Activated T-helper 2 cell treated with anti-CD3 and anti-CD28 coated beads, Interferon-gamma antibody, Interleukin-2, Interleukin-4, amounts not matched to agents 10 μg/mL and 5 μg/mL and 100 μg/mL, durations not matched to agents 14 hours and 24 hours and 36 hours (primary cell): ENCODE measurements at regions of chr1 and their contacts with region 1.

Region 1: GRCh38 chr1:32992489-32993323 is 28.1 kb upstream of the RNF19B start:
- DNase-seq: peak; percentile 59
- H3K4me3 Mint-ChIP-seq: peak overlapping the region; percentile 53
- H3K27ac Mint-ChIP-seq: peak overlapping the region; percentile 90
- H3K4me1 Mint-ChIP-seq: peaks cover 59% of the 10 kb centered on the region
- H3K27me3 Mint-ChIP-seq: no peaks in the 10 kb centered on the region

Region 2: DNA sequence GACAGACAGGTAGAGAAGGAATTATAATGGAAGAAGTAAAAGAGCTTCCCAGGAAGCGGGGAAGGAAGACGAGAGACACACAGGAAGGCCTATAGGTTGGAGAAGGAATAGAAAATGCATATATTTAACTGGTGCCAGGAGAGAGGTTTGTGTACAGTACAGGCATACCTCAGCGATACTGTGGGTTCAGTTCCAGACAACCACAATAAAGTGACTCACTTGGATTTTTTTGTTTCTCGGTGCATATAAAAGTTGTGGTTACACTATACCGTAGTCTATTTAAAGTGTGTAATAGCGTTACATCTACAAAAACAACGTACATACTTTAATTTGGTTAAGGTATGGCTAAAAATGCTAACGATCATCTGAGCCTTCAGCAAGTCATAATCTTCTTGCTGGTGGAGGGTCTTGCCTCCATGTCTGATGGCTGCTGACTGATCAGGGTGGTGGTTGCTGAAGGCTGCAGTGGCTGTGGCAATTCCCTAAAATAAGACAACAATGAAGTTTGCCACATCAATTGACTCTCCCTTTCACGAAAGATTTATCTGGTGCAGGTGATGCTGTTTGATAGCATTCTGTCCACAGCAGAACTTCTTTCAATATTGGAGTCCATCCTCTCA is 191.5 kb before region 1 on chr1:
- intact Hi-C with region 1: loop called (anchors 1 kb)
- DNase-seq: no peak
- H3K4me3 Mint-ChIP-seq: peak overlapping the region; percentile 67
- H3K27ac Mint-ChIP-seq: peak overlapping the region; percentile 92
- H3K4me1 Mint-ChIP-seq: peaks cover 43% of the 10 kb centered on the region
- H3K27me3 Mint-ChIP-seq: no peaks in the 10 kb centered on the region

Region 3: GRCh38 chr1:32876341-32877210 is 116.1 kb before region 1 on chr1:
- intact Hi-C with region 1: no loop called
- DNase-seq: peak; percentile 58
- H3K4me3 Mint-ChIP-seq: no peak overlapping the region
- H3K27ac Mint-ChIP-seq: no peak overlapping the region
- H3K4me1 Mint-ChIP-seq: peaks cover 4% of the 10 kb centered on the region
- H3K27me3 Mint-ChIP-seq: peaks cover 26% of the 10 kb centered on the region

Region 4: GRCh38 chr1:32939655-32940371 is 52.9 kb before region 1 on chr1:
- intact Hi-C with region 1: loop called (anchors 1 kb)
- DNase-seq: no peak
- H3K4me3 Mint-ChIP-seq: no peak overlapping the region
- H3K27ac Mint-ChIP-seq: peak overlapping the region; percentile 74
- H3K4me1 Mint-ChIP-seq: peaks cover 43% of the 10 kb centered on the region
- H3K27me3 Mint-ChIP-seq: no peaks in the 10 kb centered on the region

Region 5: GRCh38 chr1:32964461-32965250 is 28.1 kb before region 1 on chr1 and contains the start of gene RNF19B:
- intact Hi-C with region 1: loop called (anchors 1 kb)
- DNase-seq: peak; percentile 94
- H3K4me3 Mint-ChIP-seq: peak within 1 kb of the TSS; percentile 91
- H3K27ac Mint-ChIP-seq: peak within 1 kb of the TSS; percentile 74
- H3K4me1 Mint-ChIP-seq: peaks cover 49% of the 10 kb centered on the region
- H3K27me3 Mint-ChIP-seq: no peaks in the 10 kb centered on the region
- total RNA-seq, gene RNF19B: 50.4 and 52.5 TPM in 2 replicates

Region 6: GRCh38 chr1:32981003-32981901 is 11.5 kb before region 1 on chr1:
- intact Hi-C with region 1: loop called (anchors 1 kb)
- DNase-seq: peak; percentile 58
- H3K4me3 Mint-ChIP-seq: peak overlapping the region; percentile 47
- H3K27ac Mint-ChIP-seq: peak overlapping the region; percentile 87
- H3K4me1 Mint-ChIP-seq: peaks cover 63% of the 10 kb centered on the region
- H3K27me3 Mint-ChIP-seq: no peaks in the 10 kb centered on the region

Region 7: GRCh38 chr1:33025181-33025571 is 32.5 kb after region 1 on chr1:
- intact Hi-C with region 1: loop called (anchors 2 kb)
- DNase-seq: no peak
- H3K4me3 Mint-ChIP-seq: no peak overlapping the region
- H3K27ac Mint-ChIP-seq: peak overlapping the region; percentile 59
- H3K4me1 Mint-ChIP-seq: peaks cover 51% of the 10 kb centered on the region
- H3K27me3 Mint-ChIP-seq: no peaks in the 10 kb centered on the region